Body of pancreas (tissue), 4 donors: ENCODE measurements at regions of chr6 and their contacts with region 1.

Region 1: DNA sequence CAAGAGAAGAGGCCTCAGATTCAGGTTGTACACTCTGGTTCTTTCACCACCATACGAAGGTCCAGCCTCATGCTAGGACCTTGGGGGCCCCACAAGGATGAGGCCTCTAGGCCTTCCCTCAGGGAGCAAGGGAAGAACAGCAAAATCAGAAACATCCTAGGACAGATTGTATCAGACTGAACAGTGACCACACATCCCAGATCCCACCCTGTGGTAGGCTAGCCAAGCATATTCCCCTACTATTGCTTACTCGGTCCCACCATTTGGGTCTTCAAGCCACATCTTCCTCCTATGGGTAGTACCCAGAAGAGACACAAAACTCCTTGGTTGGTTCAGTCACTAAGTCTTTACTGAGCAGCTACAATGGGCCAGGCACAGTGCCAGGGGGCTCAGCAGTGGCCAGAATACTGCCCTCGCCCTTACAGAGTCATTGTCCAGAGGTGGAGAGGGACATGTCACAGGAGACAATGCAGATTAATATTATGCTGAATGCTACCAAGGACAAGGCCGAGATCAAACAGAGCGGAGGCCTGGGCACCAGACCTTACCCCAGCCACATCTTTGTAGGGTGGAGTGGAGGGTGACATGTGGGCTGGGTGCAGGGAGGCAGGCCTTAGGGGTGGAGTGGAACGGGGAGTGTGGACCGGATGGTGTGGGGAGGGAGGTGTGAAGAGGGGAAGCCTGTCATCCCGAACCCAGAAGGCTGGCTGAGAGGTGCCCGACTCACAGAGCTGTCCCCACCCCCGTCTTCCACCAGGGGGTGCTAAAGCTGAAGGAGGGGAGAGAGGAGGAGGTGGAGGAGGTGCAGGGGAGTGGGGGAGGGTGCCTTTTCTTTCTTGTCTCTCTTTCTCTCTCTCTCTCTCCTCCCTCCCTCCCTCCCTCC is 6.8 kb upstream of the MAPK13 start:
- DNase-seq: peak; percentile 81 to 86 (median 84)
- ATAC-seq: peak; percentile 91
- H3K4me3 ChIP-seq: no peak overlapping the region
- H3K27ac ChIP-seq: no peak overlapping the region
- H3K4me1 ChIP-seq: peaks cover 16% of the 10 kb centered on the region
- H3K27me3 ChIP-seq: no peaks in the 10 kb centered on the region
- CTCF ChIP-seq: peak; percentile 63 to 85 (median 83)
- POLR2A ChIP-seq: no peak

Region 2: DNA sequence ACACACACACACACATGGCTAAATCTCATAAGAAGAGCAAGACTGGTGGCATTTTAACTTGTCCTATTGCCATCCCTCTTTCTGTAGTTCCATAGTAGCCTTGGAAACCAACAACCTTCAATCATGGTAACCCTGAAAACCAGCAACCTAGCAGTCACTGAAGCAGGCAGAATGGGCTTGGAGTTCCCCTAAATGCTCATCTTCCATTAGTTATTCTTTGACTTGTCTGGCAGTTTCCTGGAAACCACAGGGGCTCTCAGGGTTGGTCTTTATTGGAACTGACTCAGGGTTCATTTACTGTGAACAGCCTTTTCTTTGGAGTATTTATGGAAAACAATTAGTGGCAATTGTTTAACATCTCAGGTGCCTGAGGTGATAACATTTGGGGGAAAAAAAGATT is 53.7 kb after region 1 on chr6:
- intact Hi-C with region 1: no loop called
- DNase-seq: no peak
- ATAC-seq: no peak
- H3K4me3 ChIP-seq: no peak overlapping the region
- H3K27ac ChIP-seq: no peak overlapping the region
- H3K4me1 ChIP-seq: no peaks in the 10 kb centered on the region
- H3K27me3 ChIP-seq: no peaks in the 10 kb centered on the region
- CTCF ChIP-seq: no peak
- POLR2A ChIP-seq: no peak

Region 3: DNA sequence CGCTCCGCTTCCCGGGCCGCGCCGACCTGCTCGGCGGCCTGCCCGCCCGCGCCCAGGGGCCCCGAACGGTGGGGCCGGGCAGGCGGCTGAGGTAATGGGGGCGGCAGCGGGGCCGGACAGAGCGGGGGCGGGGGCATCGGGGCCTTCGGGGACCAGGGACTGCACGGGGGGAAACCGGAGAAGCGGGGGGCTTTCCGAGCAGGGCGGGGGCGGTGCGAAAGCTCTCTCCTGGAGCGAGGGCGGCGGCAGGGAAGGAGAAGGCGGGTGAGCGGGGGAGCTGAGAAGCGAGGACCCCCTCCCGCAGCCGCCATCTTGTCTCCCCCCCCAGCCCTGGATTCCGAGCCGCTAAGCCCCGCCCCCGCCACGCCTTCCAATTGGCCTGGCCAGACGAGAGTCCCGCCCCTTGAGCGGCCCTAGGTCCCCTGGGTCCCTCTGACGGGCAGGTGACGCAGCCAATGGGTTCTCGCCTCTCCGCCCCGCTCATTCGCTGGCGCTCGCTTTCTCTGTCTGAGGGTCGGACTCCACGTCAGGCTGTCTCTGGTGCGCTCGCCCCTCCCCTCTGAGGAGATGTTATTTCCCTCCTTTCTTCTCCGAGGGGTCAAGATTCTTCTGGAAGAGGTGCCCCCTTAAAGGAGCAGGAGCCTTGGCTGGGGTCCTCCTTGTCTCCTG is 73.5 kb after region 1 on chr6:
- intact Hi-C with region 1: loop called (anchors 10 kb)
- DNase-seq: peak; percentile 99 to 100 (median 99)
- ATAC-seq: peak; percentile 91
- H3K4me3 ChIP-seq: peak overlapping the region; percentile 66 to 82
- H3K27ac ChIP-seq: peak overlapping the region; percentile 92 to 99 (median 98)
- H3K4me1 ChIP-seq: peaks cover 10% of the 10 kb centered on the region
- H3K27me3 ChIP-seq: no peaks in the 10 kb centered on the region
- CTCF ChIP-seq: no peak
- POLR2A ChIP-seq: peak; percentile 21 to 82 (median 76)

Region 4: DNA sequence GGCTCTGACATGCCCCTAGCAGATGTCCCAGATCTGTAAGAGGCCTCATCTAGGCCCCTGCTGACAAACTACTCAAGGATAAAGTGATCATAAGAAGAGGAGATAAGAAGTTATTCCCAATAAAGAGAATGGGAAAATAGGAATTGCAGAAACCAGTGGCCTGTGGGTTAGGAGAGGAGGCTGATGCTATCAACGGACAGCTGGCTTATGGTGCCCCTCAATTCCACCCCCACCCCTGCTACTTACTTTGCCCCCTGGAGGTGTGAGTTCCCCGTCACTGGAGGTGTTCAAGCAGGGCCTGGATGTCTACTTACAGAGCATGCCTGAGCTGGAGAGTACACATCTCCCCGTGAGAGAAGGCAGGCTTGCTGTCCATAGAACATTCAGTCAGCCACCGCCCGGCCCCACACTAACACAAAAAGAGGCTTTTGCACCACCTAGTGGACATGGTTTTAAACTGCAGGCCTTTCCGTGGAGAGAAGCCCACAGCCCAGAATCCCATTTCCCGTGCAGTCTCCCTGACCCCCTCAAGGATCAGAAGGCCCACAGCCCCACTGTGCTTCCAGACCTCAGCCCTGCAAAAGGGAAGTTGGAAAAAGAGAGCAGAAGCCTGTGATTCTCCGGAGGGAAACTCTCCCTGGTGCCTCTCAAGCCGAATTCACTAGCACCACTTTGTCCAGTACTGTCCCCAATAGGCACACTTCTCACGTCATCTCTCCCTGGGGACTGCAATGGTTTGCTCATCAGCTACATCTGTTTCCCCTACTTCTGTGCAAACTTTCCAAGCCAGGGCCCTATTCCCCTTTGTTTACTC is 236.9 kb after region 1 on chr6:
- intact Hi-C with region 1: loop called (anchors 10 kb)
- DNase-seq: peak; percentile 81 to 89 (median 85)
- ATAC-seq: peak; percentile 82
- H3K4me3 ChIP-seq: no peak overlapping the region
- H3K27ac ChIP-seq: no peak overlapping the region
- H3K4me1 ChIP-seq: peaks cover 36% of the 10 kb centered on the region
- H3K27me3 ChIP-seq: no peaks in the 10 kb centered on the region
- CTCF ChIP-seq: peak; percentile 71 to 90 (median 84)
- POLR2A ChIP-seq: no peak